Gastrocnemius medialis (tissue), 4 donors: ENCODE measurements at regions of chrX and their contacts with region 1.

Region 1: DNA sequence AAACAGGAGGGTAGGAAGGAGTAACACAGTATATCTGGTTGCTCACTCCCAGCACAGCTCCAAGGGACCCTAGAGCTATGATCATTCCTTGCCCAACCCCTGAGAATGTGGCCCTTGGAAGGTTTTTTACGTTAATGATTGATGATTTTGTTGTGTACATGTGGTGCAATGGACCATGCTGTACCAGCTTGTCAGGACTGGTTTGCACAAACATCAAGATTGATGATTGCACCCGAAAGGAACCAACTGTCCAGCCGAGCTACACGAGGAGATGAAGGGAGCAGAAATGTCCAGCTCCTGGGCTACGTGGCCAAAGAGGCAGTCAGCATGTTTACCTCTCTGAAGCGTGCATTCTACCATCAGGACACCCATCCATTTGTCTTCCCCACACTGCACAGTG is 83.2 kb upstream of the USP9X start:
- DNase-seq: no peak
- ATAC-seq: no peak
- H3K4me3 ChIP-seq: no peak overlapping the region
- H3K27ac ChIP-seq: no peak overlapping the region
- H3K4me1 ChIP-seq: no peaks in the 10 kb centered on the region
- H3K27me3 ChIP-seq: no peaks in the 10 kb centered on the region
- CTCF ChIP-seq: no peak
- POLR2A ChIP-seq: no peak

Region 2: GRCh38 chrX:40755291-40756249 is 246.5 kb before region 1 on chrX:
- in situ Hi-C with region 1: no loop called
- intact Hi-C with region 1: no loop called
- DNase-seq: peak; percentile 78 to 93
- ATAC-seq: peak; percentile 92 to 94
- H3K4me3 ChIP-seq: peak overlapping the region in 3 of 4 donors; percentile 7 to 22 (median 13)
- H3K27ac ChIP-seq: peak overlapping the region; percentile 89 to 91 (median 90)
- H3K4me1 ChIP-seq: peaks cover 13 to 17% of the 10 kb centered on the region in 2 donors
- H3K27me3 ChIP-seq: no peaks in the 10 kb centered on the region
- CTCF ChIP-seq: no peak
- POLR2A ChIP-seq: no peak

Region 3: GRCh38 chrX:40908857-40909475 is 93.1 kb before region 1 on chrX:
- in situ Hi-C with region 1: no loop called
- intact Hi-C with region 1: no loop called
- DNase-seq: no peak
- ATAC-seq: no peak
- H3K4me3 ChIP-seq: no peak overlapping the region
- H3K27ac ChIP-seq: no peak overlapping the region
- H3K4me1 ChIP-seq: no peaks in the 10 kb centered on the region
- H3K27me3 ChIP-seq: peaks cover 0 to 4% (median 0%) of the 10 kb centered on the region in 3 donors
- CTCF ChIP-seq: no peak
- POLR2A ChIP-seq: no peak

Region 4: DNA sequence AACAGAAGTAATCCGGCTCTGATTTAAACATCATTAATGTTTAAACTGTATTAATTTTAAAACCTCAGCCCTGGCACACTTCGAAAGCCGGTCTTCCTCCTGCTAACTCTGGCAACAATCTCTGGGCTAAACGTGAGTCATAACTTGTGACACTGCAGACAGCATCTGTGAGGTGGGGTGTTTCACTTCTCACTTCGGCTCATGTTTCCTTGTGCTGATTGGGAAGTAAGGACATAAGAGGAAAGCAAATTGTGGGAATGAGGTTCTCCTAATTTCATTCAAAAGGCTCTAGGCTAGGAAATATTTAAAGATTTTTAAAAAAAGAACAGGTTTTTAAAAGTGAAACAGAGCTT is 56.7 kb before region 1 on chrX:
- in situ Hi-C with region 1: no loop called
- intact Hi-C with region 1: loop called (anchors 5 kb)
- DNase-seq: peak; percentile 72 to 80
- ATAC-seq: peak; percentile 98 to 99
- H3K4me3 ChIP-seq: no peak overlapping the region
- H3K27ac ChIP-seq: peak overlapping the region; percentile 77 to 86 (median 81)
- H3K4me1 ChIP-seq: peaks cover 0 to 5% of the 10 kb centered on the region in 2 donors
- H3K27me3 ChIP-seq: no peaks in the 10 kb centered on the region
- CTCF ChIP-seq: no peak
- POLR2A ChIP-seq: peak in 1 of 2 donors; percentile 10

Region 5: DNA sequence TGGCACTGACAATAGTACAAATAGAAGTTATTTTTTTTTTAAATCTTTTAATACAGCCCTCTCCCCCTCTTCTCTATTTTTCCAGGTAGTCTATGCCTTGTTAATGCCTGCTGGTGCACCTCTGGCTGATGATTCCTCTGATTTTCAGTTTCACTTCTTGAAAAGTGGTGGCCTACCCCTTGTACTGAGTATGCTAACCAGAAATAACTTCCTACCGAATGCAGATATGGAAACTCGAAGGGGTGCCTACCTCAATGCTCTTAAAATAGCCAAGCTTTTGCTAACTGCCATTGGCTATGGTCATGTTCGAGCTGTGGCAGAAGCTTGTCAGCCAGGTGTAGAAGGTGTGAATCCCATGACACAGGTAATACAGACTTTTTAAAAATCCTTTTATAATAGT is 182.3 kb after region 1 on chrX:
- in situ Hi-C with region 1: no loop called
- intact Hi-C with region 1: no loop called
- DNase-seq: no peak
- ATAC-seq: no peak
- H3K4me3 ChIP-seq: no peak overlapping the region
- H3K27ac ChIP-seq: no peak overlapping the region
- H3K4me1 ChIP-seq: peaks cover 0 to 4% of the 10 kb centered on the region in 2 donors
- H3K27me3 ChIP-seq: no peaks in the 10 kb centered on the region
- CTCF ChIP-seq: no peak
- POLR2A ChIP-seq: no peak